ENCODE measurements at regions of chr11 and their contacts with region 1.

Region 1: DNA sequence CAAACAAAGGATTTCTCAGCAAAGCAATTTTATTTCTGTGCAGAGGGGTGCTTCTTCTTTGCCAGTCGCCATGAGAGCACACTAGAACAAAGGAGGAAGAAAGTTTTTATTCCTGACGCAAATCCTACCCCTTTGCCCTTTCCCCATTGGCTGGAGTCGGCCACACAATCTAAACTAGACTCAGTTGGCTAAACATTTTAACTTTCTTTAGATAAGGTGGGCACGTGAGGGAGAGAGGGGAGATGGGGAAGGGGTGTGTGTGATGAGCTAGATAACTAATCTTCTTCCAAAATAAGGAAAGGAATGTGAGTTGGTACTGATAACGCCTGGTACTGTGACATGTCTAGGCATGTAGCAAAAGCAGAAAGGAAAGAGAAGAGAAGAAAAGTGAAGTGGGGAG is 626 bp downstream of the TRIM22 start:
- DNase-seq: peak in 2 of 14 experiments; percentile 13 to 15
- ATAC-seq: no peak
- H3K4me3 ChIP-seq: peak overlapping the region; percentile 72
- H3K4me3 Mint-ChIP-seq: peak overlapping the region; percentile 92
- H3K27ac ChIP-seq: peak overlapping the region; percentile 77 to 78
- H3K27ac Mint-ChIP-seq: peak overlapping the region; percentile 91
- H3K4me1 ChIP-seq: peaks cover 44% of the 10 kb centered on the region
- H3K4me1 Mint-ChIP-seq: peaks cover 66% of the 10 kb centered on the region
- H3K27me3 ChIP-seq: no peaks in the 10 kb centered on the region
- H3K27me3 Mint-ChIP-seq: no peaks in the 10 kb centered on the region
- CTCF ChIP-seq: no peak

Region 2: DNA sequence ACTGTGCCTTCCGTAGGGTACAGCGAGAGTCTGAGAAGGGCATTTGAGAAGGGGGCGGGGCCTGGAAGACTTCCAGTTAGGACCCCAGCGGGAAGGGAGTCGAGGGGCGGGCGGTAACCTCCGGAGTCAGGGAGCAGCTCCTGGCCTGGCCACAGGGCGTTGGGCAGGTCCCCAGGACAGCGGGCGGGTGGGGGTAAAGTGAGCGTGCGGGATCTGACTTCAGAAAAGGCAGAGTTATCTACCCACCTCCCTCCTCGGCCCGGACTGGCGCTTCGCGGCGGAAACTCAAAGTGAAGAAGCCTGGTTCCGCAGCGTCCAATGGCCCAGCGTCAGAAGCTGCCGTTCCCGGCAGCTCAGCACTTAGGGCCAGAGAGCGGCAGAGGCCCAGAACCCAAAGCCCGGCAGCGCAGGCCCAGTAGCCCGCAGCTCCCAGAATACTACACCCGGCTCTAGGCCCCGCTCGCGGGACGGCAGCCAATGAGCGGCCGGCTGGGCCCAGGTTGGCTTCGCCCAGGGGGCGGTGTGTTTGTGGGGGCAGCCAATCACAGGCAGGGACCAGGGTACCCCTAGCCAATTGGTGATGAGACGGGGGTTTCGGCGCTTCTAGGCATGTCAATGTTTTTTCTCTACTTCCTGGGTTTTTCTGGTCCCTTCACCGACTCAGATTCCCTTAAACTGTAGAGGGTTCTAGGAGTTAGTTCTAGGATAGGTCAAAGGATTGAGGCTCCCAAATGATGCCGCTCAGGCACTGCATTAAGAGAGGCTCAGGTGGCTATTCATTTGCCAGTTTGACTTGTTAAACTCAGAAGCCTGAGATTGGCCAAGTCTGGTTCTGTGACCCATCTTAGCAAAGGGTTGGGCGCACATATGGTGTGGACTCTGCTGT is 1082.2 kb before region 1 on chr11 and contains the start of gene TRIM68:
- CTCF ChIA-PET with region 1: no interaction called
- POLR2A ChIA-PET with region 1: no interaction called
- intact Hi-C with region 1: loop called in 1 of 2 experiments (anchors 10 kb)
- DNase-seq: peak; percentile 88 to 96 (median 92)
- ATAC-seq: peak; percentile 99
- H3K4me3 ChIP-seq: peak within 1 kb of the TSS; percentile 81
- H3K4me3 Mint-ChIP-seq: peak within 1 kb of the TSS; percentile 87
- H3K27ac ChIP-seq: peak within 1 kb of the TSS; percentile 74 to 79
- H3K27ac Mint-ChIP-seq: peak within 1 kb of the TSS; percentile 86
- H3K4me1 ChIP-seq: peaks cover 23% of the 10 kb centered on the region
- H3K4me1 Mint-ChIP-seq: peaks cover 53% of the 10 kb centered on the region
- H3K27me3 ChIP-seq: no peaks in the 10 kb centered on the region
- H3K27me3 Mint-ChIP-seq: no peaks in the 10 kb centered on the region
- CTCF ChIP-seq: no peak
- total RNA-seq, gene TRIM68: 4.1 to 5.4 TPM

Region 3: GRCh38 chr11:6746086-6746618 is 1055.9 kb after region 1 on chr11:
- CTCF ChIA-PET with region 1: no interaction called
- POLR2A ChIA-PET with region 1: no interaction called
- intact Hi-C with region 1: loop called in 1 of 2 experiments (anchors 10 kb)
- DNase-seq: peak in 13 of 14 experiments; percentile 19 to 84 (median 45)
- ATAC-seq: peak; percentile 81
- H3K4me3 ChIP-seq: peak overlapping the region; percentile 69
- H3K4me3 Mint-ChIP-seq: no peak overlapping the region
- H3K27ac ChIP-seq: peak overlapping the region; percentile 84 to 93
- H3K27ac Mint-ChIP-seq: no peak overlapping the region
- H3K4me1 ChIP-seq: peaks cover 17% of the 10 kb centered on the region
- H3K4me1 Mint-ChIP-seq: peaks cover 40% of the 10 kb centered on the region
- H3K27me3 ChIP-seq: no peaks in the 10 kb centered on the region
- H3K27me3 Mint-ChIP-seq: no peaks in the 10 kb centered on the region
- CTCF ChIP-seq: no peak